ENCODE measurements at regions of chr5 and their contacts with region 1.

Region 1: GRCh38 chr5:148826053-148826738 is at the start of gene ADRB2:
- DNase-seq: peak; percentile 95
- H3K4me3 Mint-ChIP-seq: peak within 1 kb of the TSS; percentile 78
- H3K27ac Mint-ChIP-seq: peak within 1 kb of the TSS; percentile 85
- H3K4me1 Mint-ChIP-seq: peaks cover 55% of the 10 kb centered on the region
- H3K27me3 Mint-ChIP-seq: peaks cover 36% of the 10 kb centered on the region
- total RNA-seq, gene ADRB2: 6.7 to 6.9 TPM

Region 2: GRCh38 chr5:148532962-148533670 is 293.1 kb before region 1 on chr5:
- CTCF ChIA-PET with region 1: no interaction called
- POLR2A ChIA-PET with region 1: no interaction called
- DNase-seq: no peak
- H3K4me3 Mint-ChIP-seq: no peak overlapping the region
- H3K27ac Mint-ChIP-seq: no peak overlapping the region
- H3K4me1 Mint-ChIP-seq: no peaks in the 10 kb centered on the region
- H3K27me3 Mint-ChIP-seq: peaks cover 14% of the 10 kb centered on the region

Region 3: DNA sequence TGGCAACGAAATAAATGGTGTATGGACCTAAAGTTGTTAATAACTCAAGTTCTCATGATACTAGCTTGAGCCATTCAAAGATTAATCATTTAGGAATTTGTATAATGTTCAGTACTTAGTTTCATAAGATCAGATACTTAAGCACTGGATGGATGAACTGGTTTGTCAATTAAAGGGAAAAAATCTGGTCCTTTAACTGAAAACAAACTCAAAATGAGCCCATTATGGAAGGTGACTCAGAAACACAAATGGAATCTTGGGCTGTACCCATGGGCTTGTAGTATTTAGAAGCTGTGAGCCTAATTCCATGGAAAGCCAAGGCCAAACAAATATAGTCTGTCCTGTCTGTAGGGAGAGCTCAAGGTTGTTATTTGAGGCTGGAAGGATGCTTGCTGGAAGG is 27.4 kb before region 1 on chr5:
- CTCF ChIA-PET with region 1: no interaction called
- POLR2A ChIA-PET with region 1: no interaction called
- DNase-seq: no peak
- H3K4me3 Mint-ChIP-seq: no peak overlapping the region
- H3K27ac Mint-ChIP-seq: no peak overlapping the region
- H3K4me1 Mint-ChIP-seq: peaks cover 10% of the 10 kb centered on the region
- H3K27me3 Mint-ChIP-seq: peaks cover 32% of the 10 kb centered on the region

Region 4: GRCh38 chr5:148808864-148809642 is 17.1 kb before region 1 on chr5:
- CTCF ChIA-PET with region 1: interaction called, 9 read pairs
- POLR2A ChIA-PET with region 1: interaction called, 10 read pairs
- DNase-seq: no peak
- H3K4me3 Mint-ChIP-seq: peak overlapping the region; percentile 76
- H3K27ac Mint-ChIP-seq: peak overlapping the region; percentile 70
- H3K4me1 Mint-ChIP-seq: peaks cover 52% of the 10 kb centered on the region
- H3K27me3 Mint-ChIP-seq: peaks cover 2% of the 10 kb centered on the region

Region 5: DNA sequence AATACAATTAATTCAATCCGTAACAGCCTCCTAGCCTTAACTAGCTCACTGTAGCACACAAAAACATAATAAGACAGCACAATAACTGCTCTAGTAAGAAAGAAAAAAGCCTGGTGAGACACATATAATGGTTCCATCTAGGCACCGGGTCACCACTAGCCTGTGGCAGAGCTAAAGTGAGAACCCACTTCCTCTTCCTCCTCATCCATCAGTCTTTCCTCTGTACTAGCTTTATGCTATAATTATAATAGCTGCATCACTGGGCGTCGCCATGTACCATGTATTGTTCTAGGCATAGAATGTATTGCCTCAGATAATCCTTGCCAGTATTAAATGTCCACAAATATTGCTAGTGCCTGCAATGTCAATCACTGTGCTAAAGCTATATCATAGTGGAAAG is 23.3 kb after region 1 on chr5:
- CTCF ChIA-PET with region 1: interaction called, 14 read pairs
- POLR2A ChIA-PET with region 1: interaction called, 58 read pairs
- DNase-seq: peak; percentile 73
- H3K4me3 Mint-ChIP-seq: peak overlapping the region; percentile 12
- H3K27ac Mint-ChIP-seq: peak overlapping the region; percentile 97
- H3K4me1 Mint-ChIP-seq: peaks cover 83% of the 10 kb centered on the region
- H3K27me3 Mint-ChIP-seq: peaks cover 2% of the 10 kb centered on the region

Region 6: GRCh38 chr5:148910686-148911361 is 84.6 kb after region 1 on chr5:
- CTCF ChIA-PET with region 1: no interaction called
- POLR2A ChIA-PET with region 1: no interaction called
- DNase-seq: no peak
- H3K4me3 Mint-ChIP-seq: no peak overlapping the region
- H3K27ac Mint-ChIP-seq: peak overlapping the region; percentile 44
- H3K4me1 Mint-ChIP-seq: peaks cover 15% of the 10 kb centered on the region
- H3K27me3 Mint-ChIP-seq: no peaks in the 10 kb centered on the region